Mammary epithelial cell (primary cell): ENCODE measurements at regions of chr14 and their contacts with region 1.

Region 1: DNA sequence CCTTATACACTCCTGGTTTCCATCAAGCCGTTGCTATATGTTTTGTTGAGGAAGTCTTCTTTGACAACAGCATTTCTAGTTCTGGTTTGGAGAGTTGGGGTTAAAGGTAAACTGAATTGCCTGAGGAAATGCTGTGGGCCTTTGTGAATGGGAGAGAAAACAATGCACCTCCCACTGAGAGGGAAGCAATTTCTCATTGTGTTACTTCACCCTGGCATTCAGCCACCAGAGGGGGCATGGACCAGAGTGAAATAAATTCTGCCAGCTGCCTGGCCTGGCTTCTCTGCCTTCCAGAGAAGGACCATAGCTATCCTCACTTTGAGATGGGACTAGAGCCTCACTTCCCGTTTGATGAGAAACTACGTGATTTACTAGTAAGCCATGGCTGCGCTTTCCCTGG is 475.3 kb downstream of the EGLN3 start:
- DNase-seq: peak; percentile 38
- H3K4me3 ChIP-seq: no peak overlapping the region
- H3K27ac ChIP-seq: no peak overlapping the region
- H3K4me1 ChIP-seq: no peaks in the 10 kb centered on the region
- H3K27me3 ChIP-seq: no peaks in the 10 kb centered on the region
- CTCF ChIP-seq: peak; percentile 44 to 47

Region 2: GRCh38 chr14:33676135-33676566 is 200.5 kb after region 1 on chr14:
- CTCF ChIA-PET with region 1: no interaction called
- dilution Hi-C with region 1: no loop called
- in situ Hi-C with region 1: no loop called
- intact Hi-C with region 1: loop called (anchors 5 kb)
- DNase-seq: peak; percentile 27
- H3K4me3 ChIP-seq: no peak overlapping the region
- H3K27ac ChIP-seq: no peak overlapping the region
- H3K4me1 ChIP-seq: peaks cover 14% of the 10 kb centered on the region
- H3K27me3 ChIP-seq: no peaks in the 10 kb centered on the region
- CTCF ChIP-seq: peak; percentile 41 to 63

Region 3: DNA sequence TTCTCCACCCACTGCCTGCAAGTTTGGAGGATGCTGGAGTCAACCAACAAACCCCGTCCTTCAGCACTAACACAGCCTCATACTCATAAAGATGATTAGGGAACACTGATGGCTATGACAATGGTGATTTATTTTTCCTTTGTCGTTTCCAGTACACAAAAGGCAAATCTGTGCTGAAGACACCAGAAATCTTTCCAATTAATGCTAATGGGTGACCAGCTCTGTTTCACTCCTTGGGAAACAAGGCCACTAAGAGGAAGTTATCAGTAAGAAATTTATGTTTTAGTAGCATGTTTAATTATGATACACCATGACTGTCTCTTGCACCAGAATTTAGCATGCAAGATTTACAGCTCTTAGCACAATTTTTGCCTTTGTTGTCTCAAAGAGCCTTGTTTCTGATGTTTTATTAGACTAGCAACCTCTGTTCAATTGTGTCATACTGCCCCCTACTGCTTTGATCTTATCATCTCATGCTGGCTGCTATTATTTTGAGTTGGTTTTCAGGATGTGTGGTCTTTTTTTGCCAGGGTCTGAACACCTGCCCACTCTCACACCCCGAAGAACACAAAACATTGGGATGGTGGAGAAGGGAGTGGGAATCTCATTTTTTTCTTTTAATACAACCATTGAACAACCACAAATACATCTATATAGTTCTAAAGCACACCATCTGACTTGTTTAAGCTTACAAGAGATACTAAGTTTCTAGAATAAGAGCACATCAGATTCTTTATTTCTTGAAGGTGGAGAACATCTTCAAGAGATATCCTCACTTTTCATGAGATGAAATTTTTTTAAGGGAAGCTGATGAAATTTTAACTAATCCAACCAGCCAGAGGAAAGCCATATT is 825.5 kb after region 1 on chr14:
- CTCF ChIA-PET with region 1: no interaction called
- dilution Hi-C with region 1: no loop called
- in situ Hi-C with region 1: no loop called
- intact Hi-C with region 1: loop called (anchors 10 kb)
- DNase-seq: peak; percentile 46
- H3K4me3 ChIP-seq: no peak overlapping the region
- H3K27ac ChIP-seq: no peak overlapping the region
- H3K4me1 ChIP-seq: peaks cover 18% of the 10 kb centered on the region
- H3K27me3 ChIP-seq: no peaks in the 10 kb centered on the region
- CTCF ChIP-seq: peak; percentile 70 to 71